CD4-positive, alpha-beta memory T cell (primary cell): ENCODE measurements at regions of chr12 and their contacts with region 1.

Region 1: DNA sequence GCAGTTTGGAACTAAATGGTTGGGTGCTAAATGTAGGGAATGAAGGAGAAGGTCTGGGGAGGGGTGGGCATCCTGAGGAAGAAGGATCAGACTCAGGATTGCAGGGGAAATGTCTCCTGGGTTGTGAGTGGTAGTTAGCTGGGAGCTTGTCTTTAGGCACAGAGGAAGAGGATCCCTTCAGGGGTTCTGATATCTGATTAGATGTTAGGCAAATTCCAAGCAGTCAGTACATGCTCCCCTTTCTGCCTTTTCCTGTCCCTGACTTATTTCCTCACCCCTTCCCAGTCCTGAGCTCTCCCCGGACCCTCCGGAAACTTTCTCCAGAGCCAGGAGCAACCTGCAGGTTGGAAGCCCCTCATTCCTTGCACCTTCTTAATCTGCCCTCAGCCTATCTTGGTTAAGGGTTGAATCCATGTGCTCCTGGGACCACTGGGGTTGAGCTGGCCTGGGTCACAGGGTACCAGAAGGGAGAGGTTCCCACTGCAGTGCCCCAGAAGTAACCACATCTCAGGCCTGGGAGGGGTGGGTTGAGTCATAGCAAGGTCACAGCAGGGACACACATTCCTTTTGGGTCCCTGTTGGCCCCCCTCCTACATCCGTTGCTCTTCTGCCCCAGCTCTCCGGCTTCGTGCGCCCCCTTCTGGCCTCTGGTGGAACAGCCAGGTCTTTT is 1.6 kb downstream of the IGFBP6 start:
- DNase-seq: peak; percentile 82 to 90 (median 84)
- H3K4me3 ChIP-seq: no peak overlapping the region
- H3K4me3 Mint-ChIP-seq: peak overlapping the region; percentile 39 to 93 (median 62)
- H3K27ac ChIP-seq: no peak overlapping the region
- H3K27ac Mint-ChIP-seq: peak overlapping the region; percentile 68 to 89 (median 85)
- H3K4me1 ChIP-seq: peaks cover 48% of the 10 kb centered on the region
- H3K4me1 Mint-ChIP-seq: peaks cover 36 to 58% (median 47%) of the 10 kb centered on the region in 4 donors
- H3K27me3 ChIP-seq: no peaks in the 10 kb centered on the region
- H3K27me3 Mint-ChIP-seq: no peaks in the 10 kb centered on the region

Region 2: DNA sequence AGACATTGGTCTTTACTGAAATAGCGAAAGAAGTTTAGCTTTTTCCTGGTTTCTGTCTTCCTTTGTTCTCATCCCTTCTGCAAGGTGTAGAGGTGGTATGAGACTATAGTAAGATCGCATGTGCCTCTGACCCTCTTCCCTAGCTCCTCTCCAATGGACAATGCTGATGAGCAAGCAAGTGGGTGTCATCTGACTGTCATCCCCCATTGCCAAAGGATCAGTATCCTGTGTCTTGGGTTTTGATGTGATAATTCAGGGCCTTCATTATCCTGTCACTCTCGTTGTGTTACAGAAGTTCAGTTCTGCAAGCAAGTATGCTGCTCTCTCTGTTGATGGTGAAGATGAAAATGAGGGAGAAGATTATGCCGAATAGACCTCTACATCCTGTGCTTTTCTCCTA is 59.3 kb before region 1 on chr12:
- CTCF ChIA-PET with region 1: interaction called, 15 read pairs
- POLR2A ChIA-PET with region 1: interaction called, 3 read pairs
- intact Hi-C with region 1: loop called (anchors 1 kb)
- DNase-seq: no peak
- H3K4me3 ChIP-seq: no peak overlapping the region
- H3K4me3 Mint-ChIP-seq: no peak overlapping the region
- H3K27ac ChIP-seq: no peak overlapping the region
- H3K27ac Mint-ChIP-seq: peak overlapping the region in 2 of 7 donors; percentile 14 to 50
- H3K4me1 ChIP-seq: peaks cover 13% of the 10 kb centered on the region
- H3K4me1 Mint-ChIP-seq: peaks cover 9 to 21% (median 12%) of the 10 kb centered on the region in 4 donors
- H3K27me3 ChIP-seq: no peaks in the 10 kb centered on the region
- H3K27me3 Mint-ChIP-seq: no peaks in the 10 kb centered on the region

Region 3: GRCh38 chr12:53047221-53048042 is 51.7 kb before region 1 on chr12:
- CTCF ChIA-PET with region 1: interaction called, 5 read pairs
- POLR2A ChIA-PET with region 1: interaction called, 19 read pairs
- intact Hi-C with region 1: loop called (anchors 5 kb)
- DNase-seq: peak; percentile 65 to 82 (median 73)
- H3K4me3 ChIP-seq: no peak overlapping the region
- H3K4me3 Mint-ChIP-seq: peak overlapping the region in 7 of 8 donors; percentile 45 to 66 (median 58)
- H3K27ac ChIP-seq: peak overlapping the region; percentile 69
- H3K27ac Mint-ChIP-seq: peak overlapping the region; percentile 25 to 97 (median 68)
- H3K4me1 ChIP-seq: peaks cover 14% of the 10 kb centered on the region
- H3K4me1 Mint-ChIP-seq: peaks cover 5 to 19% (median 12%) of the 10 kb centered on the region in 4 donors
- H3K27me3 ChIP-seq: no peaks in the 10 kb centered on the region
- H3K27me3 Mint-ChIP-seq: no peaks in the 10 kb centered on the region

Region 4: GRCh38 chr12:53054112-53054833 is 44.8 kb before region 1 on chr12:
- CTCF ChIA-PET with region 1: interaction called, 14 read pairs
- POLR2A ChIA-PET with region 1: interaction called, 6 read pairs
- intact Hi-C with region 1: loop called (anchors 5 kb)
- DNase-seq: peak; percentile 94 to 96 (median 94)
- H3K4me3 ChIP-seq: peak overlapping the region; percentile 76 to 87
- H3K4me3 Mint-ChIP-seq: peak overlapping the region; percentile 88 to 95 (median 92)
- H3K27ac ChIP-seq: peak overlapping the region; percentile 62
- H3K27ac Mint-ChIP-seq: peak overlapping the region; percentile 80 to 98 (median 93)
- H3K4me1 ChIP-seq: peaks cover 9% of the 10 kb centered on the region
- H3K4me1 Mint-ChIP-seq: peaks cover 4 to 18% (median 12%) of the 10 kb centered on the region in 4 donors
- H3K27me3 ChIP-seq: no peaks in the 10 kb centered on the region
- H3K27me3 Mint-ChIP-seq: no peaks in the 10 kb centered on the region

Region 5: DNA sequence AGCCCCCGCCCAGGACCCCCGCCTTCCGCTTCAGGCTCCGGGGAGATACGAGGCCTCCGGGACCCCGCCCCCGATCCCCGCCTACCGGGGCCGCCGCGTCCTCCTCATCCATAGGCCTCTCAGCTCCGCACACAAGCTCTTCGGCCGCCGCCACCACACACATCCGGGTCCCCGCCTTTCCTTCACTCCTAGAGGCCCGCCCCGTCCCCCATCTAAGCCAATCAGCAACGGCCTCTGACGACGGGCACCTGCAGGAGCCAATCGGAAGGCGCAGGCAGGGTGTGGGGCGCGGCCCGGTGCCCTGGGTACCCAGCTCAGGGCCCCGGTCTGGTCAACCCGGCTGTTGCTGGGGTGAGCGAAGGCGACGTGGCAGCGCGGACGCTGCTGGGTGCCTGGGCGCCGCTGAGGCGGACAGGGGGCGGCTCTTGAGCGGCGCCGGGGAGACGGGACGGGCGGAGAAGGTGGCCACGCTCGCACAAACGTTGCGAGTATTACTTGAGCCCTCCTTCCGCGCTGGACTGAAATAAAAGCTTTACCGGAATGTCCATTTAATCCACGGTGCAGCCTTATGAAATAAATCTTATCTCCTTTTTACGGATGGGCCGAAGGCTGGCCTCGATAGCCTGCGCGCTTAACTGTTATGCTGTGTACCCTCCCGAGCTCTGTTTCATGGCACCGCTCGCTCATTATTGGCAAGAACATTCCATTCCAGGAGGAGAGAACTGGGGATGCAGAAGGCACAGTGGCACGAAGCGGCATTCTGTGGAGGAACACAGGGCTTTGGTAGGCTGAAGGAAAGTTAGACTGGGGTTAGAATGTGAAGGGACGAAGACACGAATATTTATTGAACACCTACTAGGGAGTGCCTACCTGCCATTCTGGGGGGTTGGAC is 19.6 kb before region 1 on chr12 and contains the start of gene SPRYD3:
- CTCF ChIA-PET with region 1: interaction called, 511 read pairs
- POLR2A ChIA-PET with region 1: interaction called, 40 read pairs
- intact Hi-C with region 1: loop called (anchors 1 kb)
- DNase-seq: peak; percentile 96 to 99 (median 97)
- H3K4me3 ChIP-seq: peak within 1 kb of the TSS; percentile 73
- H3K4me3 Mint-ChIP-seq: peak within 1 kb of the TSS; percentile 89 to 97 (median 94)
- H3K27ac ChIP-seq: peak within 1 kb of the TSS; percentile 83
- H3K27ac Mint-ChIP-seq: peak within 1 kb of the TSS; percentile 92 to 98 (median 95)
- H3K4me1 ChIP-seq: peaks cover 29% of the 10 kb centered on the region
- H3K4me1 Mint-ChIP-seq: peaks cover 23 to 61% (median 39%) of the 10 kb centered on the region in 4 donors
- H3K27me3 ChIP-seq: no peaks in the 10 kb centered on the region
- H3K27me3 Mint-ChIP-seq: no peaks in the 10 kb centered on the region
- total RNA-seq, gene SPRYD3: 54.3 to 59.3 TPM

Region 6: DNA sequence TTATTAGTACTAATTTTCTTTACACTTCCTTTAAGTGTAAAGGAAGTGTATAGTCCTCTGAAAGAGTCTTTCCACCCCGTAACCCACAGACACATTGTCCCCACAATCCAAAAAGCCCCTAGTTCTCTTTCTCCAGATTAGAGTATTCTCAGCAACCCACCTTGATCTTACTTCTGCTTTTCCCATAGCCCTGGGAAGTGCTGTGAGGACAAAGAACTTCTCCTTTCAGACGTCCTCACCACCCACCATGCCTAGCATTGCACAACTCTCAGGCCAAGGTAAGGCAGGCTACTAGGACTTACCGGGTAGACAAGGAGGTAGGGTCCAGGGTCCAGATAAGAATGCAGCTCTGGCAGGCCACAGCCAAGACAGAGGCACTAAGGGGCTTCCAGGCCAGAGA is 214.9 kb after region 1 on chr12:
- CTCF ChIA-PET with region 1: no interaction called
- POLR2A ChIA-PET with region 1: no interaction called
- intact Hi-C with region 1: no loop called
- DNase-seq: no peak
- H3K4me3 ChIP-seq: no peak overlapping the region
- H3K4me3 Mint-ChIP-seq: no peak overlapping the region
- H3K27ac ChIP-seq: no peak overlapping the region
- H3K27ac Mint-ChIP-seq: peak overlapping the region in 4 of 7 donors; percentile 23 to 86 (median 66)
- H3K4me1 ChIP-seq: no peaks in the 10 kb centered on the region
- H3K4me1 Mint-ChIP-seq: peaks cover 3 to 5% (median 4%) of the 10 kb centered on the region in 4 donors
- H3K27me3 ChIP-seq: no peaks in the 10 kb centered on the region
- H3K27me3 Mint-ChIP-seq: no peaks in the 10 kb centered on the region

Region 7: DNA sequence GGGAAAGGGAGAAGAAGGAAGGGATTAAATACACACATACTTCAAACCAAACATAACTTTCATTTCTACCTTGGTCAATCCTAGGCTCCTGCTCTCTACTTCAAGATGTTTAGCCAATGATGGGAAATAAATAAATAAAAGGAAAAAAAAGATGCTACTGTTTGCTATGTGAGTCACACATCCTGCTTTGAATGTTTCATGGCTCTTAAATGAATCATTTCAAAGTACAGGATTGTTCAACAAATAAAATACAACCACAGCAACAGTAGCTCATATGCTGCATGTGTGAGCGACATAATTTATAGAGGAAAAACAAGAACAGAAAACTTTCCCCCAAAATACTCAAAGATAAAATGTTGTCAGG is 462.5 kb after region 1 on chr12:
- CTCF ChIA-PET with region 1: no interaction called
- POLR2A ChIA-PET with region 1: no interaction called
- intact Hi-C with region 1: no loop called
- DNase-seq: no peak
- H3K4me3 ChIP-seq: no peak overlapping the region
- H3K4me3 Mint-ChIP-seq: no peak overlapping the region
- H3K27ac ChIP-seq: no peak overlapping the region
- H3K27ac Mint-ChIP-seq: peak overlapping the region in 2 of 7 donors; percentile 58 to 63
- H3K4me1 ChIP-seq: peaks cover 25% of the 10 kb centered on the region
- H3K4me1 Mint-ChIP-seq: peaks cover 24 to 44% (median 38%) of the 10 kb centered on the region in 4 donors
- H3K27me3 ChIP-seq: no peaks in the 10 kb centered on the region
- H3K27me3 Mint-ChIP-seq: no peaks in the 10 kb centered on the region